A549 (cell line): ENCODE measurements at regions of chr1 and their contacts with region 1.

Region 1: GRCh38 chr1:31715087-31715872 is 11.5 kb upstream of the COL16A1 start:
- DNase-seq: peak; percentile 87 to 93
- ATAC-seq: peak; percentile 87 to 96
- H3K4me3 ChIP-seq: peak overlapping the region; percentile 49
- H3K27ac ChIP-seq: peak overlapping the region; percentile 91 to 94
- H3K4me1 ChIP-seq: peaks cover 53% of the 10 kb centered on the region
- CTCF ChIP-seq: peak; percentile 57
- EP300 ChIP-seq: no peak
- POLR2A ChIP-seq: peak; percentile 73
- RAD21 ChIP-seq: peak; percentile 43 to 56

Region 2: DNA sequence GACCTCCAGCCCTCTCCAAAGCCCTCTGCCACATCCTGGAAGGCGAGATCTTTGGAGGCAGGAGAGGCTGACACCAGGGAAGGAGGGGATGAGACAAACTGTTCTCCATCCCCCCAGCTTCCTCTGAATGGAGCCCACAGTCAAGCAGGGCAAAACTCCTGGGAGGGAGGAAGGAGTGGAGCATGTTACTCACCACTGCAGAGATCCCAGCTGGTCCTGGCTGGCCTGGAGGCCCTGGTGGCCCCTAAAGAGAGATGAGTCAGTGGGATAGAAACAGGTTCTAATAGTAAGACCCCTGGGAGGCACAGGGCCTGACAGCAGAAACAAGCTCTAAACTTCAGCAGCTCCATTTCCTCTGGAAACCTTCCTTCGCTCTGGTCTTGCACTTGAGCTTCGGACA is 56.6 kb before region 1 on chr1:
- CTCF ChIA-PET with region 1: interaction called, 183 read pairs
- POLR2A ChIA-PET with region 1: interaction called, 25 read pairs
- DNase-seq: no peak
- ATAC-seq: no peak
- H3K4me3 ChIP-seq: no peak overlapping the region
- H3K27ac ChIP-seq: no peak overlapping the region
- H3K4me1 ChIP-seq: no peaks in the 10 kb centered on the region
- CTCF ChIP-seq: no peak
- EP300 ChIP-seq: no peak
- POLR2A ChIP-seq: no peak
- RAD21 ChIP-seq: no peak

Region 3: DNA sequence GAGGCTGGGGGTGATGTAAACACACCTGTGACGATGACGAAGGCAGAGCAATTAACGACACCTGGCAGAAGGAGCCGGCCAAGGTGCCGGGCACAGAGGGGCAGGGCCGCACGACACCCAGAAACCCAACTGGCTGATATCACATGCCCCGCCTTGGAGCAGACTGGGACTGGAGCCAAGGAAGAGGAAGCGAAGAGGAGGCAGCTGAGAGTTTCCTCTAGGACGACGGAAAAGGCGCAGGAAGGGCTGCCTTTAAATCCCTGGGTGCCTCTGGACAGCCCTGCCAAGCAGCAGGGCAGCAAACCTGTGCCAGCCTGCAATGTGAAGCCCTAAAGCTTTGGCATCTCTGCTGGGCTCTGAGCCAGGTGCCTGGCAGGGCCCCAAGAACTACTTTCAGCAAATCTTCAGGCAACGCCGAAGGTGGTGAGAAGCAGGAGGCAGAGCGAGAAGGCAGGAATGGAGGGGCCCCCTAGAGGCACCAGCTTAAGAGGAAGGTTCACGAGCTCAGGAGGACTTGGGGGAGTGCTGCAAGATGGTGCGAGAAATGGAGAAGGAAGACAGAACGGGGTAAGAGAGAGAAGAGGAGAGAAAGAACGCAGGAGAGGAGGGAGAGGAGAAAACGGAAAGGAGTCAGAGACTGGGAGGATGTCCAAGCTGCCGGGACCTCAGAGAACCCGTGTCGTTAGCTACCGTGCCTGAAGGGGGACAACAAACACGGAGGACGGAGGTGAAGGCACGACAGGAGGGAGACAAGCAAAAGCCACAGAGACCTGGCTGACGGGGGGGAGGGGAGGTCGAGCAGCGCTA is 45.3 kb before region 1 on chr1:
- CTCF ChIA-PET with region 1: interaction called, 183 read pairs
- POLR2A ChIA-PET with region 1: interaction called, 25 read pairs
- DNase-seq: peak; percentile 22 to 40
- ATAC-seq: peak; percentile 20 to 58; a peak in 3 of 6 replicates
- H3K4me3 ChIP-seq: no peak overlapping the region
- H3K27ac ChIP-seq: peak overlapping the region; percentile 28 to 91
- H3K4me1 ChIP-seq: peaks cover 42% of the 10 kb centered on the region
- CTCF ChIP-seq: no peak; the same call in 2 of the 3 replicates
- EP300 ChIP-seq: no peak
- POLR2A ChIP-seq: no peak
- RAD21 ChIP-seq: 0 out of 5 replicates have a peak, but pooled peaks of 1 of the 2 experiments have one; percentile 5

Region 4: GRCh38 chr1:31689821-31690220 is 25.5 kb before region 1 on chr1:
- CTCF ChIA-PET with region 1: interaction called, 40 read pairs
- POLR2A ChIA-PET with region 1: interaction called, 5 read pairs
- DNase-seq: peak; percentile 47 to 64
- ATAC-seq: peak; percentile 57 to 66; a peak in 4 of 6 replicates
- H3K4me3 ChIP-seq: no peak overlapping the region
- H3K27ac ChIP-seq: peak overlapping the region; percentile 68 to 95
- H3K4me1 ChIP-seq: peaks cover 61% of the 10 kb centered on the region
- CTCF ChIP-seq: no peak
- EP300 ChIP-seq: no peak
- POLR2A ChIP-seq: no peak
- RAD21 ChIP-seq: no peak

Region 5: GRCh38 chr1:31733389-31734219 is 18.3 kb after region 1 on chr1:
- CTCF ChIA-PET with region 1: interaction called, 11 read pairs
- POLR2A ChIA-PET with region 1: no interaction called
- DNase-seq: no peak
- ATAC-seq: no peak; a peak in 1 of 6 replicates
- H3K4me3 ChIP-seq: no peak overlapping the region
- H3K27ac ChIP-seq: no peak overlapping the region
- H3K4me1 ChIP-seq: no peaks in the 10 kb centered on the region
- CTCF ChIP-seq: no peak
- EP300 ChIP-seq: no peak
- POLR2A ChIP-seq: no peak
- RAD21 ChIP-seq: no peak

Region 6: DNA sequence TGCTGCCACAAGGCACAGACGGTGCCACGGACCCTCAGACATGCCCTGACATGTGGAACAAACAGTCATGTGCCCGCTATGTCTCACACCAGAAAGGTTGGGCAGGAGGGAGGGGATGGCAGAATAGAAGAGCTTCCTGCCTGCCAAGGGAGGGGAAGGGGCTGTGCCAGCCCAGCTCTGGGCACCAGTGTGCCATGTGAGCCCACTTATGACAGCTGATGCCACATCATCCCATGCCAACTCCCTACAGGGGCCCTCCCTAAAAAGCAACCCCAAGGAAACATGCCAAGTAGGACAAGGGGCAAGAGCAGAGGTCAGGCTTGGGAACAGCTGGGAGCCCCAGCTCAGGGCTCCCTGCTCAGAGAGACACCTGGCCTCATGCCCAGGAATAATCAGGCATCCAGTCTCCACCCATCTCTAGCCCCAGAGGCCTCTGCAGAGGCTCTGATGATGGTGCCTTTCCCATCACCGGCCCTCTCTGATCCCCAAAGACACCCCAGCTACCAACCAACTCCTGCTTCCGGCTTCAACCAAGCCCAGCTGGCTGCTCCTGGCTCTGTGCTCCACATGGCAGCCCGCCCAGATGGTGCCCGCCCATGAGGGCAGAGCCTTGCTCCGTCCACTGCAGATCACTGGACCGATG is 38.5 kb after region 1 on chr1:
- CTCF ChIA-PET with region 1: interaction called, 17 read pairs
- POLR2A ChIA-PET with region 1: no interaction called
- DNase-seq: no peak
- ATAC-seq: no peak
- H3K4me3 ChIP-seq: no peak overlapping the region
- H3K27ac ChIP-seq: peak overlapping the region in 1 of 2 experiments; percentile 28; a peak in 1 of 6 replicates
- H3K4me1 ChIP-seq: peaks cover 8% of the 10 kb centered on the region; the same call in 2 of the 3 replicates
- CTCF ChIP-seq: no peak
- EP300 ChIP-seq: no peak
- POLR2A ChIP-seq: no peak
- RAD21 ChIP-seq: no peak

Region 7: DNA sequence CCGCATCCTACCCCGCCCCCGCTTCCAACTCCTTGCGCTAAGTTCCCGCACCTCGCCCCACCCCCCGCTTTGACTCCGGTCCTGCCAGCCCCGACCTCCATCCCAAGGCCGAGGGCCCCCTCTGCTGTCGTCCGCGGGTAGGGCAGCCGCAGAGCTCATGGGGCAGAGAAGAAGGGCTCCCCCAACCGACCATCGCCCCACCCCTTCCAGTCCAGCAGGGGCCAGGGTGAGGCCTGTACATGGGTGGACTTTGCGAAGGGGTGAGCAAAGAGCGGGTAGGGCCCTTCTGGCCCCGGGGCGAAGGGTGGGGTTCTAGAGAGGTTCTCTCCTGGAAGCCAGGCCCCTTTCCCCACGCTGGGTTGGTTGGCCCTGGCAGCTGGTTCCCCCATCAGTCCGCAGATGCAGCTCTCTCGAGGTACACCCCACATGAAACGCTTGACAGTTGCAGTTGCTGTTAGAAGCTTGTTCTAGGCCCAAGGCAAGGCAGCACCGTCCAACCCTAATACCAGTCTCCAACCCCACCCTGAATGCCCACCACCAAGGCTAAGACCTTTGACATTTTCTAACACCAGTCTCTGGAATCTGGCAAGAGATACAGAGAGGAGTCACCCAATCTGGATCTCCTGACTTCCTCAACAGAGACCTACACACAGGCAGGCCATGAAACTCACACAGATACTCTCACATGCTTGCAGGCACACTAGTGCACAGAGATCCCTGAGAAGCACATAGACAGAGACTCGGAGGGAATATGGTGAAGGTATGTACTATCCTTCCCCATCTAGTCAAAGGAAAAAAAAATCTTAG is 74.2 kb after region 1 on chr1:
- CTCF ChIA-PET with region 1: interaction called, 43 read pairs
- POLR2A ChIA-PET with region 1: no interaction called
- DNase-seq: peak; percentile 86 to 94
- ATAC-seq: peak; percentile 72 to 88
- H3K4me3 ChIP-seq: peak overlapping the region; percentile 69
- H3K27ac ChIP-seq: peak overlapping the region; percentile 94 to 95
- H3K4me1 ChIP-seq: peaks cover 13% of the 10 kb centered on the region
- CTCF ChIP-seq: peak; percentile 72
- EP300 ChIP-seq: no peak
- POLR2A ChIP-seq: no peak
- RAD21 ChIP-seq: peak; percentile 90 to 97